ENCODE measurements at regions of chr2 and their contacts with region 1.

Region 1: GRCh38 chr2:39124000-39124745 is 3.3 kb upstream of the SOS1 start:
- DNase-seq: peak; percentile 97
- H3K4me3 Mint-ChIP-seq: peak overlapping the region; percentile 89
- H3K27ac Mint-ChIP-seq: peak overlapping the region; percentile 92
- H3K4me1 Mint-ChIP-seq: peaks cover 63% of the 10 kb centered on the region
- H3K27me3 Mint-ChIP-seq: no peaks in the 10 kb centered on the region

Region 2: GRCh38 chr2:39033980-39034379 is 90.2 kb before region 1 on chr2:
- CTCF ChIA-PET with region 1: no interaction called
- POLR2A ChIA-PET with region 1: no interaction called
- DNase-seq: no peak
- H3K4me3 Mint-ChIP-seq: no peak overlapping the region
- H3K27ac Mint-ChIP-seq: no peak overlapping the region
- H3K4me1 Mint-ChIP-seq: peaks cover 7% of the 10 kb centered on the region
- H3K27me3 Mint-ChIP-seq: no peaks in the 10 kb centered on the region

Region 3: GRCh38 chr2:39094852-39095306 is 29.3 kb before region 1 on chr2:
- CTCF ChIA-PET with region 1: interaction called, 3 read pairs
- POLR2A ChIA-PET with region 1: interaction called, 53 read pairs
- DNase-seq: no peak
- H3K4me3 Mint-ChIP-seq: no peak overlapping the region
- H3K27ac Mint-ChIP-seq: peak overlapping the region; percentile 65
- H3K4me1 Mint-ChIP-seq: peaks cover 69% of the 10 kb centered on the region
- H3K27me3 Mint-ChIP-seq: no peaks in the 10 kb centered on the region

Region 4: GRCh38 chr2:39135690-39136259 is 11.6 kb after region 1 on chr2:
- CTCF ChIA-PET with region 1: interaction called, 14 read pairs
- POLR2A ChIA-PET with region 1: interaction called, 770 read pairs
- DNase-seq: no peak
- H3K4me3 Mint-ChIP-seq: peak overlapping the region; percentile 38
- H3K27ac Mint-ChIP-seq: peak overlapping the region; percentile 89
- H3K4me1 Mint-ChIP-seq: peaks cover 76% of the 10 kb centered on the region
- H3K27me3 Mint-ChIP-seq: peaks cover 2% of the 10 kb centered on the region

Region 5: GRCh38 chr2:39188960-39189494 is 64.9 kb after region 1 on chr2:
- CTCF ChIA-PET with region 1: no interaction called
- POLR2A ChIA-PET with region 1: interaction called, 10 read pairs
- DNase-seq: no peak
- H3K4me3 Mint-ChIP-seq: no peak overlapping the region
- H3K27ac Mint-ChIP-seq: no peak overlapping the region
- H3K4me1 Mint-ChIP-seq: peaks cover 11% of the 10 kb centered on the region
- H3K27me3 Mint-ChIP-seq: no peaks in the 10 kb centered on the region

Region 6: GRCh38 chr2:39210846-39211245 is 86.7 kb after region 1 on chr2:
- CTCF ChIA-PET with region 1: interaction called, 5 read pairs
- POLR2A ChIA-PET with region 1: interaction called, 543 read pairs
- DNase-seq: no peak
- H3K4me3 Mint-ChIP-seq: no peak overlapping the region
- H3K27ac Mint-ChIP-seq: peak overlapping the region; percentile 29
- H3K4me1 Mint-ChIP-seq: peaks cover 41% of the 10 kb centered on the region
- H3K27me3 Mint-ChIP-seq: no peaks in the 10 kb centered on the region

Region 7: GRCh38 chr2:39227628-39228412 is 103.6 kb after region 1 on chr2:
- CTCF ChIA-PET with region 1: interaction called, 134 read pairs
- POLR2A ChIA-PET with region 1: interaction called, 543 read pairs
- DNase-seq: peak; percentile 88
- H3K4me3 Mint-ChIP-seq: peak overlapping the region; percentile 64
- H3K27ac Mint-ChIP-seq: peak overlapping the region; percentile 90
- H3K4me1 Mint-ChIP-seq: peaks cover 53% of the 10 kb centered on the region
- H3K27me3 Mint-ChIP-seq: no peaks in the 10 kb centered on the region

Measured in activated CD4-positive, alpha-beta memory T cell treated with anti-CD3 and anti-CD28 coated beads, Interleukin-2, amount 10 ng/mL, durations not matched to agents 7 days and 5 days (primary cell).